ENCODE measurements at regions of chr3 and their contacts with region 1.

Region 1: DNA sequence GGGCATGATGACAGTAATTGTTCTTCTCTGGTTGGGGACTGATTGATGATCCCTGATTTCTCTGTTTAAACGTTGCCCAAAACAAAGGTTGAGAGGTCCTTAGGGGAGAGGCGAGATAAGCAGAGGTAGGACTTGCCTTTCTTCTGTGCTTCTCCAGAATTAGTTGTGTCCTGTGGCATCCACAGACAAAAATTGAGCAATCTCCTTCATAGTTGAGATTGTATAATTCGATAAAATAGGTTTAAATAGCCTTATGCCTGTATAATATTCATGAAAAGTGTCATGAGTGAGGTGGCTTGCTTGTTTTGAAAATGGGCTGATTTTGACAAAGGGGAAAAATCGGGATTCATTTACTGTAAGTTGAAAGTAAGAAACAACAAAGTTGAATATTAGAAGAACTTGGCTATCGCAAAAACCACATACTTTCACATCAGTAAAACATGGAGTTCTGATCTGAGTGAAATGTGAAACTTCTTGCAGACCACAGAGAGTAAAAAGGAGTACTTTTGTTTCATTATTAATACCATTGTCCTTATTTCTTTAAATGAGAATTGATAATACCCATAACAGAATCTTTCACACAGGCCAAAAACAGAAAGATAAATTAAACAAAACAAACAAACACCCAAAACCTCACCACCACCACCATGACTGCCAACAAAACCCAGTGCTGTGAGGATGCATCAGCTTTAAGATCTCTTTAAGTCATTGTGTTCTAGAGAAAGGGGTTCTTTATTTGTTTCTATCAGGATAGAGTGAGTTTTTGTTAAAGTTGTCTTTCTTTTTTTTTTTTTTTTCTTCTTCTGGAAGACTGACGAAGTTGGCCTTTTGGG is 155.7 kb downstream of the LPP start:
- DNase-seq: no peak
- H3K4me3 ChIP-seq: no peak overlapping the region
- H3K4me3 Mint-ChIP-seq: no peak overlapping the region
- H3K27ac Mint-ChIP-seq: peak overlapping the region; percentile 53
- H3K4me1 ChIP-seq: peaks cover 4% of the 10 kb centered on the region; the same call in 1 of the 2 replicates
- H3K4me1 Mint-ChIP-seq: peaks cover 13% of the 10 kb centered on the region
- H3K27me3 ChIP-seq: no peaks in the 10 kb centered on the region
- H3K27me3 Mint-ChIP-seq: no peaks in the 10 kb centered on the region
- CTCF ChIP-seq: no peak

Region 2: DNA sequence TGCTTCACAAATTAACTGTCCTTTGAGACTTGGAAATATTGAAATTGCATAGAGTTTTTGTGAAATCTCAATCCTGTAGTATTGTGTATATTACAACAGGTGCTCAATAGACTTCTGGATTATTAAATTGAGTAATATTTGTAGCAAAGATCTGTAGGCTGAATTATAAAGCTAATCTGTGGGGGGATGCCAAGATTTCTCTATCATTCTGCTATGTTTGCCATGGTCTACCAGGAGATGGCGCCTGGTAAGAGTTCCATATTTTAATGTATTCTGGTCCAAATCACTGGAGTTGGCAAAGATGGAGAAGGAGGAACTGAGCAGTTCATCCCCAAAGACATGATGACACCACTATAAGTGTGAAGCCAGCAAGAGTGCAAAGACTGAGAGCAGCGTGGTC is 521.2 kb after region 1 on chr3:
- CTCF ChIA-PET with region 1: no interaction called
- POLR2A ChIA-PET with region 1: no interaction called
- intact Hi-C with region 1: loop called (anchors 10 kb)
- DNase-seq: no peak
- H3K4me3 ChIP-seq: no peak overlapping the region
- H3K4me3 Mint-ChIP-seq: no peak overlapping the region
- H3K27ac Mint-ChIP-seq: no peak overlapping the region
- H3K4me1 ChIP-seq: peaks cover 8% of the 10 kb centered on the region; the same call in 1 of the 2 replicates
- H3K4me1 Mint-ChIP-seq: peaks cover 18% of the 10 kb centered on the region
- H3K27me3 ChIP-seq: no peaks in the 10 kb centered on the region
- H3K27me3 Mint-ChIP-seq: no peaks in the 10 kb centered on the region
- CTCF ChIP-seq: peak in 1 of 2 experiments; percentile 22

Measured in Caco-2 (cell line).